HepG2 (cell line): ENCODE measurements at regions of chr1 and their contacts with region 1.

Region 1: GRCh38 chr1:228964178-228965089 is 229.2 kb downstream of the RHOU start:
- DNase-seq: peak; percentile 88
- ATAC-seq: peak; percentile 97
- H3K4me3 ChIP-seq: peak overlapping the region; percentile 9 to 39 (median 36); a peak in 5 of 6 replicates
- H3K27ac ChIP-seq: peak overlapping the region; percentile 64
- H3K4me1 ChIP-seq: peaks cover 44% of the 10 kb centered on the region
- H3K27me3 ChIP-seq: no peaks in the 10 kb centered on the region
- CTCF ChIP-seq: no peak
- EP300 ChIP-seq: peak in 1 of 2 experiments; percentile 66; a peak in 1 of 4 replicates
- POLR2A ChIP-seq: peak in 1 of 2 experiments; percentile 29; a peak in 1 of 4 replicates
- RAD21 ChIP-seq: no peak

Region 2: DNA sequence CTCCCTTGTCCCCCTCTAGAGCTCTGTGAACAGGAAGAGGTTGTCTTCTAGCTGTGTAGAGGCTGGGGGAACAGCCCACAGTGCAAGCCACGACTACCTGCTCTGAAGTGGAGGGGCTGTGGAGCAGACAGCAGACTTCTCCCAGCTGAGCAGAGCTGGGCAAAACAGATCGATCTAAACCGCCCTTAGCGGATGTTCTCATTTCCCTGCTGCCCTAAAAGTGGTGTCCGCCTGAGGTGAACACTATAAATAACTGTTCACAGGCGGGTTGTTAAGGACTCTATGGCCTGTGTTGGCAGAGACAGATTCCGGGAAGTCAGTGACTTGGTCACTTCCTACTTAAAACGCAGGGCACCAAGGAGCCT is 25.9 kb before region 1 on chr1:
- CTCF ChIA-PET with region 1: no interaction called
- POLR2A ChIA-PET with region 1: interaction called, 19 read pairs
- in situ Hi-C with region 1: no loop called
- intact Hi-C with region 1: loop called (anchors 1 kb)
- DNase-seq: peak; percentile 67
- ATAC-seq: peak; percentile 78
- H3K4me3 ChIP-seq: peak overlapping the region; percentile 2 to 31 (median 9); a peak in 3 of 6 replicates
- H3K27ac ChIP-seq: peak overlapping the region; percentile 74
- H3K4me1 ChIP-seq: peaks cover 81% of the 10 kb centered on the region
- H3K27me3 ChIP-seq: no peaks in the 10 kb centered on the region
- CTCF ChIP-seq: 0 out of 2 replicates have a peak, but pooled peaks have one; percentile 4
- EP300 ChIP-seq: peak in 1 of 2 experiments; percentile 17; a peak in 1 of 4 replicates
- POLR2A ChIP-seq: 0 out of 4 replicates have a peak, but pooled peaks of 1 of the 2 experiments have one; percentile 47
- RAD21 ChIP-seq: no peak

Region 3: DNA sequence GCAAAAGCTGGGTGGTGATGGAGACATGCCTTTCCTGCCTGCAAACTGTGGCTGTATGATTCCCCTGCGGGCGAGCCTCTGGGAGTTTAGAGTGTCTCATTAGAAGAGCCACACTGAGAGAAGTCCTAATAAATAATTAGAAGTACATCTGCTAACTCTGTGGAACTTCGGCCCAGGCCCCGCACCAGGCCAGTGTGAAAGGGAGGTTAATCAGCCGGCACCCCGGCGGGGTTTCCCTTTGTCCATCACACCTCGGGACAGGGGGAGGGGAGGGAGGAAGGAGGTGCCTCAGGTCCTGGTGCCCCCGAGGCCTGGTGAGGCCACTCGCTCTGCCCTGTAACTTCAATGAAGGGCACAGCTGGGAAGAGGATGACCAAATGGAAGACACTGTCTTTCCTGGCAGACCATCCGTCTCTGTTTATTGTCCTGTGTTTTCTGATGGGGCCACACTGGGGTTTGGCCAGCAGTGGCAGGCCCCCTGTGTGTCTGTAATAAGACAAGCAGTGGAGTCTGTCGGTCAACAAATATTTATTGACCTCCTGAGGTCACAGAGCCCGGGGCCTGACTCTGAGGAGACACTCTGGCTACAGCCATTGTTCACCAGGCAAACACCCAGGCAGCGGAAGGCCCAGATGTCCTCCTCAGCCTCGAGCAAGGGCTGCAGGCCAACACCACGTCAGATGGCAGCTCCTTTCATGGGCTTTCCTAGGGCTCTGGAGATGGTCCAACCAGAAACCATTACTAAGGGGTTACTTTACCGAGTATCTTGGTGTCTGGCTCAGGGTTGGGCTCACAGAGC is 39.0 kb after region 1 on chr1:
- CTCF ChIA-PET with region 1: no interaction called
- POLR2A ChIA-PET with region 1: interaction called, 10 read pairs
- in situ Hi-C with region 1: no loop called
- intact Hi-C with region 1: no loop called
- DNase-seq: peak; percentile 92
- ATAC-seq: peak; percentile 92
- H3K4me3 ChIP-seq: peak overlapping the region in 1 of 3 experiments; percentile 23; a peak in 1 of 6 replicates
- H3K27ac ChIP-seq: peak overlapping the region; percentile 69
- H3K4me1 ChIP-seq: peaks cover 70% of the 10 kb centered on the region
- H3K27me3 ChIP-seq: no peaks in the 10 kb centered on the region
- CTCF ChIP-seq: 0 out of 2 replicates have a peak, but pooled peaks have one; percentile 8
- EP300 ChIP-seq: peak; percentile 35 to 89; a peak in 2 of 4 replicates
- POLR2A ChIP-seq: no peak
- RAD21 ChIP-seq: no peak

Region 4: DNA sequence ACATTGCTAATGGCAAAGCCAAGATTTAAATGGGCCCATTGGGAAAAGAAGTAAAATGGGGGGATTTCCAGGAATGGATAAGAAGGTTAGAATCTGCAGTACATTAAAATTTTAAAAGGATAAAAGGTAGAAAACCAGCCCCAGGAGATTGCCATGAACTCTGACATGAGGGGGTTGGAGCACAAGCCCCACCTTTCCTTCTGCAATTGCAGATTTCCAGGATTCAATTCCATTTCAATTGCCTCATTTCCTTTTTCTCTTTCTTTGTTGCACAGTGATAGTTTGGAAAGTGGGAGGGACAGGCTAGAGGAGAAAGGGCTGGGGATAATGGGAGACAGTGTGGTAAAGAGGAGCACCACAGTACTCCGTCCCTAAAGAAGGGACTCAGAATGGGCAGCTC is 67.9 kb after region 1 on chr1:
- CTCF ChIA-PET with region 1: no interaction called
- POLR2A ChIA-PET with region 1: interaction called, 16 read pairs
- in situ Hi-C with region 1: no loop called
- intact Hi-C with region 1: no loop called
- DNase-seq: peak; percentile 57
- ATAC-seq: peak; percentile 17; the same call in 2 of the 3 replicates
- H3K4me3 ChIP-seq: no peak overlapping the region
- H3K27ac ChIP-seq: peak overlapping the region; percentile 79
- H3K4me1 ChIP-seq: peaks cover 82% of the 10 kb centered on the region
- H3K27me3 ChIP-seq: no peaks in the 10 kb centered on the region
- CTCF ChIP-seq: no peak
- EP300 ChIP-seq: no peak
- POLR2A ChIP-seq: no peak
- RAD21 ChIP-seq: no peak

Region 5: GRCh38 chr1:229059671-229060539 is 95.5 kb after region 1 on chr1:
- CTCF ChIA-PET with region 1: no interaction called
- POLR2A ChIA-PET with region 1: no interaction called
- in situ Hi-C with region 1: no loop called
- intact Hi-C with region 1: loop called (anchors 1 kb)
- DNase-seq: no peak
- ATAC-seq: peak; percentile 28
- H3K4me3 ChIP-seq: no peak overlapping the region
- H3K27ac ChIP-seq: peak overlapping the region; percentile 4
- H3K4me1 ChIP-seq: peaks cover 73% of the 10 kb centered on the region
- H3K27me3 ChIP-seq: no peaks in the 10 kb centered on the region
- CTCF ChIP-seq: no peak
- EP300 ChIP-seq: no peak
- POLR2A ChIP-seq: no peak
- RAD21 ChIP-seq: no peak

Region 6: DNA sequence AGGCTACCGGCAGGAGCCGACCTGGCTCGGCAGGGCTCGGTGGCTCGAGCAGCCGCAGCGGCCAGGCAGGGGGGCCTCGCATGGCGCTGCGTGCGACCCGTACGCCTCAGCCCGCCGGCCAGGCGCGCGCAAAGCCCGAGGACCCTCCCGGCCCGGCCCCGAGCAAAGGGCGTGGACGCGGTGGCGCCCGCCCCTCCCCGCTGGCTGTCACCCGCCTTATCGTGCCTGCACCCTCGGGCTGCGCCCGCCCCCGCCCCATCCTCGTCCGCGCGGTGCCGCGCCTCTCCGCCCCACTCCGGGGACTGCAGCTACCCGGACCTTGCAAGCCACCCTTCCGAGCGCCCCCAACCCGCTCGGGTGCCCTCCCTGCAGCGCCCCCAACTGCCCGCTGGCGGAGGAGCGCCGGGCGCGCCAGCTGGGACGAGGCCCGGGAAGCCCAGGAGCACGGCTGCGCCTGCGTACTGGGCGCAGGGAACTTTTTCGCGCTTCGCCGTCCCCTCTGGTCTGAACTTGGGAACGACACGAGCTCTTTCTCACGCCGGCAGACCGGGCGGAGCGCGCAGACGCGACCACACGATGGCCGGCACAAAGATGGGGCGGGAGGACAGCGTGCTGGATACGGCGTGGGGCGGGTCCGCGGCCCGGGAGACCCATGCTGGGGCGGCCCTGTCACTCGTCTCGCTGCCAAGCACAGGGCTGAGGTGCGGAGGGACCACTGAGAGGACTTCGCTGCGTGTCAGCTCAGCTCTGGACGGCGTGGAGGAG is 594.3 kb after region 1 on chr1 and contains the start of gene ABCB10:
- CTCF ChIA-PET with region 1: no interaction called
- POLR2A ChIA-PET with region 1: no interaction called
- in situ Hi-C with region 1: no loop called
- intact Hi-C with region 1: no loop called
- DNase-seq: peak; percentile 95
- ATAC-seq: peak; percentile 87
- H3K4me3 ChIP-seq: peak within 1 kb of the TSS; percentile 78 to 90 (median 81)
- H3K27ac ChIP-seq: peak within 1 kb of the TSS; percentile 88
- H3K4me1 ChIP-seq: peaks cover 43% of the 10 kb centered on the region
- H3K27me3 ChIP-seq: no peaks in the 10 kb centered on the region; a peak in 1 of 5 replicates
- CTCF ChIP-seq: peak; percentile 94
- EP300 ChIP-seq: 0 out of 4 replicates have a peak, but pooled peaks of 1 of the 2 experiments have one; percentile 13
- POLR2A ChIP-seq: peak in 1 of 2 experiments; percentile 78; a peak in 2 of 4 replicates
- RAD21 ChIP-seq: peak; percentile 63; the same call in 1 of the 2 replicates
- total RNA-seq, gene ABCB10: 20.1 and 28.9 TPM in 2 replicates